Activated CD4-positive, alpha-beta T cell treated with anti-CD3 and anti-CD28 coated beads, Interleukin-2, amount 10 ng/mL, durations not matched to agents 24 days and 14 days (primary cell): ENCODE measurements at regions of chr1 and their contacts with region 1.

Region 1: DNA sequence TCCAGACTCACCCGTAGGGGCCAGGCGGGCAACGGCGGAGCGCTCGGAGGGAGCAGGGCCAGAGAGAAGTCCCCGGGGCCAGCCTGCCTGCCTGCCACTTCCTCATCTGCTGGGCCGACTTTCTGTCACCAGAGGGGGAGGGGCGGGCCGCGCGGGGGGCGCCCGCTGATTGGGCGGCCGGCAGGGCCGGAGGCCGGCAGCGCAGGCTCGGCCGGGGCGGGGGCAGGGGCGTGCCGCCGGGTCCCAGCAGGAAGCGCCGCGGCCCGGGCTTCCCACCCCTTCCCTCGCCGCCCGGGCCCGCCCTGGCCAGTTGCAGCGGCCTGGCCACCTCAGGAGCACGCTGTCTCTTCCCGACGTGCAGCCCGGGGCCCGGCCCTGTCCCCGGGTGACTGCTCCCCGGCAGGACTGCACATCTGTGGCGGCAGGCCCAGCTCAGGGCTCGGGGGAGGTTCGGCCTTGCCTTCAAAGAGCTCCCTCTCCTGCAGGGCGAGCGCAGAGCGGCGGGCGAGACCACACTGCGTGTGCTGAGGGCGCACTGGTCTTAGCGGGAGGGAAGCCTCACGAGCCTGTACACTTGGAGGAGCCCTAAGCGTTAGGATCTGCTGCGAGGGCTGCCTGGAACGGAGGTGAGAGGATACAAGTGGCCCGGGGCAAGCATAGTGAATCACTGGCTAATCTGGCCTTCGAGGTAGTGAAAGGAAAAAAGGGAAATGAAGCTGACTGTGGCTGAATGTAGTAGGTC is at the start of gene ELOVL1:
- DNase-seq: peak; percentile 96
- H3K4me3 Mint-ChIP-seq: peak within 1 kb of the TSS; percentile 100
- H3K27ac Mint-ChIP-seq: peak within 1 kb of the TSS; percentile 96
- H3K4me1 Mint-ChIP-seq: peaks cover 30% of the 10 kb centered on the region
- H3K27me3 Mint-ChIP-seq: no peaks in the 10 kb centered on the region
- total RNA-seq, gene ELOVL1: 76.8 and 85.1 TPM in 2 replicates

Region 2: GRCh38 chr1:42931108-42931539 is 437.0 kb before region 1 on chr1:
- intact Hi-C with region 1: loop called (anchors 10 kb)
- DNase-seq: peak; percentile 87
- H3K4me3 Mint-ChIP-seq: peak overlapping the region; percentile 79
- H3K27ac Mint-ChIP-seq: peak overlapping the region; percentile 91
- H3K4me1 Mint-ChIP-seq: peaks cover 72% of the 10 kb centered on the region
- H3K27me3 Mint-ChIP-seq: no peaks in the 10 kb centered on the region

Region 3: DNA sequence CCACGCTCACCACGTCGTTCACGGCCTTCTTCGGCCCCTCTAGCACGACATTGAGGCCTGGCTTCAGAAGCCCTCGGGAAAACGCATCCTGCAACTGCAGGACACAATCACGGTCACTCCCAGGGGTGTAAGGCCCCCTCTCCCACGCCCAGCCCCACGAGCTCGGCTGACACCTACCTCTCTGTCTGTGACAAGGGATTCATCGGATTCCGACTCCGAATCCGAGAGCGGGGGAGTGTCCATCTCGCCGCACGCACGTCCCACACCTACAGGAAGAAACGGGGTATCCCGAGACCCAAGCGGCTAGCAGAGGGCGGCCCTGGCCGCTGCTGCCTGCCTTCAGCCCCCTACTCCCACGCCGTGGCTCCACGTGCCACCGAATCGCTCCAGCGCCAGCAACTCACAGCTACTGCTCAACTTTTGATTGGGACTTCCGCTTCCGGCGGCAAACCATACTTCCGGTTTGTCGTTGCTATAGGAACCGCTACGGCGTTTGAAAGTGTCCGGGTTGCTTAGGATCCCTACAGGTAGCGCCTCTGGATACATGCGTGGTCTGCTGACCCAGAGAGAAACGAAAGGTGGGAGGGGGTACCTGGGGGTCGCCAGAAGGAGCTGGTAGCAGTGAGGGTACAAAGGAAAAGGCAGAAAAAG is 196.1 kb before region 1 on chr1 and contains the starts of genes CFAP57 and EBNA1BP2:
- intact Hi-C with region 1: loop called (anchors 5 kb)
- DNase-seq: peak; percentile 98
- H3K4me3 Mint-ChIP-seq: peak within 1 kb of the TSS; percentile 97
- H3K27ac Mint-ChIP-seq: peak within 1 kb of the TSS; percentile 97
- H3K4me1 Mint-ChIP-seq: peaks cover 26% of the 10 kb centered on the region
- H3K27me3 Mint-ChIP-seq: peaks cover 22% of the 10 kb centered on the region
- total RNA-seq, gene CFAP57: 0.40 TPM in 1 of 2 replicates, not detected in the other
- total RNA-seq, gene EBNA1BP2: 134 and 135 TPM in 2 replicates

Region 4: DNA sequence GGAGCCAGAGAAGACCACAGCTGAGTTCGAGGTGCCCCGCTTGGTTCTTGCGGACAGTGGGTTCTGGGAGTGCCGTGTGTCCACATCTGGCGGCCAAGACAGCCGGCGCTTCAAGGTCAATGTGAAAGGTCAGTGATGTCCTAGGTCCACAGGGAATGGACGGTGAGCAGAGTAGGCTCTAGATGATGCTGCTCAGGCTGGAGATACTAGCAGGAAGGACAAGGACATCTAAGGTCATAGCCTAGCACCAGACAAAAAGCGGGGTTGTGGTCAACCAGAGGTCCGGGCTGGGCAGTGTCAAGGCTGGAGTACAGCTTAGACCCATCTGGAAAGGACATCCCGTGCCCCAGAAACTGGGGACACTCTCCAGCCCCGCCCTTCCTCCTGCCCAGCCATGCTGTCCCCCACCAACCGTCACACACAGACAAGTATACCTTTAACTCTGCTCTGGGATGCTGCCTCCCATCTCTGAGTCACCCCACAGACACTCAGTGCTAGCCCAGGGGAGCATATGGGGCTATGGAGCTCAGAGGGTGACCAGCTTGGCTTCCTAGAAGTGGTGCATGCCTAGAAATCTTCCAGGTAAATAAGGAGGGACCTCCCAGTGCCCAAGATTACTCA is 58.6 kb before region 1 on chr1:
- intact Hi-C with region 1: no loop called
- DNase-seq: no peak
- H3K4me3 Mint-ChIP-seq: no peak overlapping the region
- H3K27ac Mint-ChIP-seq: no peak overlapping the region
- H3K4me1 Mint-ChIP-seq: no peaks in the 10 kb centered on the region
- H3K27me3 Mint-ChIP-seq: peaks cover 2% of the 10 kb centered on the region

Region 5: DNA sequence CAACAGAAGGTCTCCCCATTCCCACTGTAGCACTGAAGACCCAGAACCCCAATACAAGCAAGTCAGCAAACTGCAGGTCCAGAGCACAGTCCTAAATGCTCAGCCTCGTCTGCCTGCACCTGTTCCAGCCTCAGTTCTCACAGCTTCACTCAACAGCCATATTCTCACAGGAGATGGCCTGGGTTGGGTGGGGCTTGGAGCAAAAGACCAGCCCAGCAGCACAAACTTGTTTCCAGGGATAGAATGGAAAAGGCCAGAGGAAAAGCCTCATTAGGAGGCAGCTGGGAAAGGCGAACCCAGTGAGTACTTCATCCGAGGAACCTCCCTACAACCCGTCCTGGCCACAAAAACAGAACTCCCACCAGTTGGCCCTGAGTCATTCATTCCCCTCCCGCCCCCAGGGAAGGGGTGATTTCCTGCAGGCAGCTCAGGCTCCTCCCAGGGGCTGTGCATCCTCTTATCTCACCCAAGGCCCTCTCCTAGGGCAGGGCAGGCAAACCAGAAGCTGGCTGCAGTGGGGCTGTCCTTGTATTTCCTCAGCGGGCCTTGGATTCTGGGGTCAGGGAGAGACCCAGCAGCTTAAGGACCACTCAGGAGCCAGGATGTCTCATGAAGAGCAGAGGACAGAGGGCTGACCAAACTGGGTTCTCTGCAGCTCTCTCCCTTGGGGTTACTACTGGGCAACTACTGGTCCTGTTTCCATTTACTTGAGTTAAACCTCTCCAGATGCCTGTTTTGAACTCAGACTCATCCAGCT is 37.9 kb before region 1 on chr1:
- intact Hi-C with region 1: loop called (anchors 1 kb)
- DNase-seq: peak; percentile 78
- H3K4me3 Mint-ChIP-seq: peak overlapping the region; percentile 38
- H3K27ac Mint-ChIP-seq: peak overlapping the region; percentile 84
- H3K4me1 Mint-ChIP-seq: peaks cover 23% of the 10 kb centered on the region
- H3K27me3 Mint-ChIP-seq: no peaks in the 10 kb centered on the region

Region 6: DNA sequence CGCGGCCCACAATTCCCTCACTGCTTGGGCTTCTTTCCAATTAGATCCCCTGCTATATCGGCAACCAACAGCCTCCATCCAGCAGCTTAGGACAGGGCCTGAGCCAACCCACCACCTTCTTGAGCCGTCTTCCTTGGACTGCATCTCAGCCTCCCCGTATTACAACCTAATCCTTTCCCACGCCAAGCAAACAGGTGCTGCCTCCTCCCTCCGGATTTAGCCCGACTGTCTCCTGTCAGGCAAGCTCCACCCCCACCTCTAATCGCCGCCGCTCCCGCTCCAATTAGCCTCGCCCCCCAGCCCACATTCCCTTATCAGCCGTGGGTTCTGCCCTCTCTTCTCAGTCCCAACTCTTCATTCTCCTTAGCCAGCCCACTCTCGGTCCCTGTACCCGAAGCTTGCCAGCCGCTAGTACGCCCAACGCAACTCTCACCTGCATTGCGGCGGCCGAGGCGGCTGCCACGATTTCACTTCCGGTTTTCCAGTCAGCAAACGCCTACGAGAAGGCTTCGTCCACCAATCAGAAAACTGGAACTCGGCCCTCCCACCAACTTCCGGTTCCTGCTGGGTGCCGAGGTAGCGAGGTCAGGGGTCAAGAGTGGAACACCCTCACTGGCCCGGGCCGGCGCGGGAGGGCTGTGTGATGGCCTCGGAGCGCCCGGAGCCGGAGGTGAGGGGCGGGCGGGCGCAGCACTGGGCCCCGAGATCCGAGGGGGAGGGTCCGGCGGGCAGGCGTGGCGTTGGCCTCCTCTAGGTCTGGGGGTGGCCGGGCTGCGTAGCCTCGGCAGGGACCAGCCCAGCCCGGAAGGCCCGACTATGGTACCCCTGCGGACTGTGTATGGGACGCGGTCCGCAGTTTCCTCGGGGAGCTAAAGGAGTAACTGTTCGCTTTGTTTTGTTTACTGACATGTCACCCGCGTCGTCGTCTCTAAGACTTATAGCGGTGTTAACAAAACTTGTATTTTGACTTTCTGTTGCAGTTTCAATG is 21.5 kb after region 1 on chr1 and contains the starts of genes MED8 and SZT2:
- intact Hi-C with region 1: loop called (anchors 1 kb)
- DNase-seq: peak; percentile 99
- H3K4me3 Mint-ChIP-seq: peak within 1 kb of the TSS; percentile 99
- H3K27ac Mint-ChIP-seq: peak within 1 kb of the TSS; percentile 95
- H3K4me1 Mint-ChIP-seq: peaks cover 40% of the 10 kb centered on the region
- H3K27me3 Mint-ChIP-seq: no peaks in the 10 kb centered on the region
- total RNA-seq, gene MED8: 39.6 and 45.1 TPM in 2 replicates
- total RNA-seq, gene SZT2: 54.0 and 56.2 TPM in 2 replicates

Region 7: DNA sequence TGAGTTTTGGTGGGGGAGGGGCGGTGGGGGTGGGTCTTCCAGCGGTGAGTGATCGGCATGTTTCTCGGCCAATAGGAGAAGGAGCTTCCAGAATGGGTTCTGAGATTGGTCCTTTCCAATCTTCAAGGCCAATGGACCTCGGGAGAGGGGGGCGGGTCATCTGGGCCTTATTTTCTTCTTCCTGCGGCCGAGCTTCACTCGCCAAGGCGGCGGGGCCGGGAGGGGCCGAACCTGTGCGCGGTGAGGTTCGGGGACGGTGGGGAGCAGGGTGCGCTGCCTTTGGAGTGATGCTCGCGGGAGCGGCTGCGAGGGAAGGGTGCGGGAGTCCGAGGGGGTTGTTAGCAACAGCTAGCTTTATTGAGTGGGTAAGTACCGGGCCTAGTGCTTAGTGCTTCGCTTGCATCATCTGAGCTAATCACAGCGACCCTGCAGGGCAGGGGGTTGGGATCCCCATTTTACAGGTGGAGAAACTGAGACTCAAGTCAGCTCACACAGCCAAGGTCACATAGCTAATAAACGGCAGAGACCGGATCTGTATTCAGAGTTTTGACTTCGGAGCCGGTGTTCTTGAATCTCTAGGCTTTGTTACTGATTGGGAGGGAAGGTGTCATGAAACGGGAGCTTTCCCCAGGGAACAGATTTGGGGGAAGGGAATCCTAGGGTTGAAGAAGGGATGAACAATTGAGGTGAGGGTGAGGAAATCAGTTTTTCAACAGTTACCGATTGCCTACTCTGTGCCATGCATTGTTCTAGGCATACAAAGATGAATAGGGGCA is 282.4 kb after region 1 on chr1:
- intact Hi-C with region 1: loop called (anchors 5 kb)
- DNase-seq: peak; percentile 97
- H3K4me3 Mint-ChIP-seq: peak overlapping the region; percentile 91
- H3K27ac Mint-ChIP-seq: peak overlapping the region; percentile 98
- H3K4me1 Mint-ChIP-seq: peaks cover 25% of the 10 kb centered on the region
- H3K27me3 Mint-ChIP-seq: peaks cover 5% of the 10 kb centered on the region

Region 8: DNA sequence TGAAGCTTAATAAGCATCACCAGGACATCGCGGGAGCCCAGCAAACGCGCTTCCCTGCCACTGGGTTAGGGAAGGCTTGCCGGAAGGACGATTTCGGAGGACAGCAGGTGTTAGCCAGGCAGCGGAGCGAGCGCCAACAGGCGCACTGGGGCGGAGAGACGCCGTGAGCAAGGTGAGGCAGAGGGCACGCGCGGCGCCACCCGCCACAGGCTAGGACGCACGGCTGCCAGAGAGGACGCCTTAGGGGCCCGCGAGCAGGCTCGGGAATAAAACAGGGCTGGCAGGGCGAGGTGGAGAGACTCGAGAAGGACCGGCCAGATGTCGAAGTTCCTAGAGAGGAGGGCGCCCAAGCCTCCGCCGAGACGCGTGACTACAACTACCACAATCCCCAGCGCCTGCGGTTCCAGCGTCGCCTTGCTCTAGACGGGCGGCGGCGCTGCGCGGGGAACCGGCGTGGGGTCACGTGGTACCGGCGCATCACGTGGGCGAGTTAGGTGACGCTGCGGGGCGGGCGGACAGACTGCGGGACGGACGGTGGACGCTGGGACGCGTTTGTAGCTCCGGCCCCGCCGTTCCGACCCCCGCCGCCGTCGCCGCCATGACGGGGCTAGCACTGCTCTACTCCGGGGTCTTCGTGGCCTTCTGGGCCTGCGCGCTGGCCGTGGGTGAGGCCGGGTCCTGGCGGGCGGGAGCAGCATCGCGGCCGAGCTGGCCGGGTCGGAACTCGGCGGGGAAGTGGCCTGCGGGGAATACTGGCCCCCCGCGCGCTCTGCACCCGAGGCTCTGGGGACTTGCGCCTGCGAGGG is 606.6 kb after region 1 on chr1 and contains the start of gene ATP6V0B:
- intact Hi-C with region 1: loop called (anchors 10 kb)
- DNase-seq: peak; percentile 99
- H3K4me3 Mint-ChIP-seq: peak within 1 kb of the TSS; percentile 91
- H3K27ac Mint-ChIP-seq: peak within 1 kb of the TSS; percentile 86
- H3K4me1 Mint-ChIP-seq: peaks cover 49% of the 10 kb centered on the region
- H3K27me3 Mint-ChIP-seq: no peaks in the 10 kb centered on the region
- total RNA-seq, gene ATP6V0B: 181 and 182 TPM in 2 replicates